HAP-1 (cell line): ENCODE measurements at regions of chr19 and their contacts with region 1.

Region 1: GRCh38 chr19:42529248-42529764 is 1.0 kb upstream of the CEACAM1 start:
- DNase-seq: peak; percentile 40 to 82
- H3K4me3 ChIP-seq: no peak overlapping the region
- H3K4me1 ChIP-seq: peaks cover 8% of the 10 kb centered on the region
- H3K27me3 ChIP-seq: no peaks in the 10 kb centered on the region

Region 2: DNA sequence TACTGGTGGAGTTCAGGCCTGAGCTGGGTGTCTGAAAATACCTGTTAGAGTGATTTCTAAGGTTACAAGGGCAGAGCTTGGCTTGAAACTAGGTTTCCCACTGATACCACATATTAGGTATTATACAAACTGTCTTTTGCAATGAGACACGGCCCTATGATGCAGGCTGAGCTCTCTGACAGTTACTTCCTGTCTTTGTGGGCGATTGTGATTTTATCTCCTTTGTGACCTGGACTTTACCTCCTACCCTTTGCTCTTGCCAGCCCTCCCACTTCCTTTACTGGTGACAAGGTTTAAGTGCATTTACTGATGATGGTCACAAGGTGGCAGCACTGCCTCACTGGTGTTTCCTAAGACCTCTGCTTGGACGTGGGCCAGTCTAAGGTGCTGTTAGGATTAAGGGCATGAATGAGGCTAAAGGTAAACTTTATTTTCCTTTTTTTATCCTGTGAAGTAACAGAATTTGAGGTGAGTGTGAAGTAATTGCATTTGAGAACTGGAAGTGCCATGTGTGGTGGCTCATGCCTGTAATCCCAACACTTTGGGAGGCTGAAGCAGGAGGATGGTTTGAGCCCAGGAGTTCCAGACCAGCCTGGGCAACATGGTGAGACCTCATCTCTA is 78.9 kb before region 1 on chr19:
- in situ Hi-C with region 1: loop called (anchors 5 kb)
- DNase-seq: peak; percentile 85 to 86
- H3K4me3 ChIP-seq: no peak overlapping the region
- H3K4me1 ChIP-seq: no peaks in the 10 kb centered on the region
- H3K27me3 ChIP-seq: peaks cover 7% of the 10 kb centered on the region; the same call in 1 of the 2 replicates